MCF 10A (cell line): ENCODE measurements at regions of chr1 and their contacts with region 1.

Region 1: DNA sequence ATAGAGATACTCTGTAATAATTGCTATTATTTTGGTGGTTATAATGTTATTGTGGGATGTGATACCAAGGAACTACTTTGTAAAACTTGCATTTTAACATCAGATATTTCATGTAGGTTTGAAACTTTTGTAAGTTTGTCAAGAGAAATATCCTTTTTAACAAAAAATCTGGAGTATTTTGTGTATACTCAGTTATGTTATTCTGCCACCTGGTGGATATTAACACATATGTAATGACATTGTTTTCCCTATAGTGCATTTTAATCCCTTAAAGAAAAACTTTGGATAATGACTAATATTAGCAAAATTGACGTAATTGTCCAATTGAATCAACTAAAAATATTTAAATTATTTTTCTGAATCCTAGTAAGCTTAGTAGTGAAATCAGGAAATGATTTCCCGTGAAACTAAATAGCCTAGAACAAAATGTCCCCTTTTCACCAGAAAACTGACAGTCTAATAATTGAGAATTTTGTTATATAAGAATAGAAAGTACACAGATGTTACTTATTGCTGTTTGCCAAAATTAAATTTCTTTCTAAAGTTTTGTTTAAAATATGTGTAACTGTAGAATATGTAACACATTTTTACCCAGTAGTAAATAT is 39.6 kb downstream of the KCTD3 start:
- DNase-seq: peak; percentile 50
- H3K4me3 Mint-ChIP-seq: no peak overlapping the region
- H3K27ac Mint-ChIP-seq: peak overlapping the region; percentile 32
- H3K4me1 Mint-ChIP-seq: peaks cover 21% of the 10 kb centered on the region
- H3K27me3 Mint-ChIP-seq: no peaks in the 10 kb centered on the region
- CTCF ChIP-seq: peak; percentile 68

Region 2: GRCh38 chr1:215543191-215543606 is 63.5 kb before region 1 on chr1:
- CTCF ChIA-PET with region 1: interaction called, 10 read pairs
- POLR2A ChIA-PET with region 1: interaction called, 5 read pairs
- intact Hi-C with region 1: no loop called
- DNase-seq: peak; percentile 79
- H3K4me3 Mint-ChIP-seq: no peak overlapping the region
- H3K27ac Mint-ChIP-seq: peak overlapping the region; percentile 24
- H3K4me1 Mint-ChIP-seq: peaks cover 35% of the 10 kb centered on the region
- H3K27me3 Mint-ChIP-seq: no peaks in the 10 kb centered on the region
- CTCF ChIP-seq: no peak

Region 3: GRCh38 chr1:215583185-215583749 is 23.4 kb before region 1 on chr1:
- CTCF ChIA-PET with region 1: interaction called, 10 read pairs
- POLR2A ChIA-PET with region 1: interaction called, 6 read pairs
- intact Hi-C with region 1: no loop called
- DNase-seq: peak; percentile 69
- H3K4me3 Mint-ChIP-seq: peak overlapping the region; percentile 60
- H3K27ac Mint-ChIP-seq: peak overlapping the region; percentile 89
- H3K4me1 Mint-ChIP-seq: peaks cover 16% of the 10 kb centered on the region
- H3K27me3 Mint-ChIP-seq: no peaks in the 10 kb centered on the region
- CTCF ChIP-seq: no peak

Region 4: DNA sequence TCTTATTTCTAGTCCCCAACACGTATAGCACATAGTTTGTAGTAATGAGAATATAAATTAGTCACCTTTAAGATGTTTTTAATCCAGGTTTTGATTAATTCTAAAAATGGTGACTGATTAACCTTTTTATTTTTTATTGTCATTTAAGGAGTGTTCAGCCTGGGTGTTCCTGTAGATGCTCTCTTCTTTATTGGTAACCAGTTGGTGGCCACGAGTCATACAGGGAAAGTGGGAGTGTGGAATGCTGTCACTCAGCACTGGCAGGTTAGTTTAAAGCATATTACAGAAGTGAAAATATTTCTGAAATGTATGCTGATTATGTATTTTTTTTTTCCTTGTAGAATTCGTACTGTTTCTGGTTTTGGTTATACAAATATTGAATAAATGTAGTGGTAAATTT is 11.5 kb before region 1 on chr1:
- CTCF ChIA-PET with region 1: interaction called, 52 read pairs
- POLR2A ChIA-PET with region 1: interaction called, 6 read pairs
- intact Hi-C with region 1: no loop called
- DNase-seq: no peak
- H3K4me3 Mint-ChIP-seq: no peak overlapping the region
- H3K27ac Mint-ChIP-seq: peak overlapping the region; percentile 33
- H3K4me1 Mint-ChIP-seq: peaks cover 17% of the 10 kb centered on the region
- H3K27me3 Mint-ChIP-seq: no peaks in the 10 kb centered on the region
- CTCF ChIP-seq: no peak

Region 5: DNA sequence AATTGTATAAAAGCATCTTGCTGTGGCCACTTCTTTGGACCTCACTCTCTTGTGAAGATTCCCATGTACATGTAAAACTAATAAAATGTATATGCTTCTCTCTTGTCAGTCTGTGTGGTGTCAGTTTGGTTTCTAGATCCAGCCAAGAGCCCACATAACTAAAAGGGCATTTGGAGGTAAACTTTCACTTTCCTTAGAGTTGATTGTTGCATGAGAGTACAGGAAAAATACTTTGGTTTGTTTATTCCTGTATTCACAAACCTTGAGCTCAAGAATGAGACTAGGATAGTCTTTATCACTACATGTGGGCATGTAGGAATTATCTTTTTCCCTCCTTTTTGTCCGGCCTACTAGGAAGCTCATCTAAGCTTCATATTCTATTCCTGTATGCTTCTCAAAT is 11.3 kb after region 1 on chr1:
- CTCF ChIA-PET with region 1: interaction called, 31 read pairs
- POLR2A ChIA-PET with region 1: interaction called, 7 read pairs
- intact Hi-C with region 1: no loop called
- DNase-seq: no peak
- H3K4me3 Mint-ChIP-seq: no peak overlapping the region
- H3K27ac Mint-ChIP-seq: peak overlapping the region; percentile 20
- H3K4me1 Mint-ChIP-seq: no peaks in the 10 kb centered on the region
- H3K27me3 Mint-ChIP-seq: no peaks in the 10 kb centered on the region
- CTCF ChIP-seq: no peak